Keratinocyte (primary cell): ENCODE measurements at regions of chr6 and their contacts with region 1.

Region 1: DNA sequence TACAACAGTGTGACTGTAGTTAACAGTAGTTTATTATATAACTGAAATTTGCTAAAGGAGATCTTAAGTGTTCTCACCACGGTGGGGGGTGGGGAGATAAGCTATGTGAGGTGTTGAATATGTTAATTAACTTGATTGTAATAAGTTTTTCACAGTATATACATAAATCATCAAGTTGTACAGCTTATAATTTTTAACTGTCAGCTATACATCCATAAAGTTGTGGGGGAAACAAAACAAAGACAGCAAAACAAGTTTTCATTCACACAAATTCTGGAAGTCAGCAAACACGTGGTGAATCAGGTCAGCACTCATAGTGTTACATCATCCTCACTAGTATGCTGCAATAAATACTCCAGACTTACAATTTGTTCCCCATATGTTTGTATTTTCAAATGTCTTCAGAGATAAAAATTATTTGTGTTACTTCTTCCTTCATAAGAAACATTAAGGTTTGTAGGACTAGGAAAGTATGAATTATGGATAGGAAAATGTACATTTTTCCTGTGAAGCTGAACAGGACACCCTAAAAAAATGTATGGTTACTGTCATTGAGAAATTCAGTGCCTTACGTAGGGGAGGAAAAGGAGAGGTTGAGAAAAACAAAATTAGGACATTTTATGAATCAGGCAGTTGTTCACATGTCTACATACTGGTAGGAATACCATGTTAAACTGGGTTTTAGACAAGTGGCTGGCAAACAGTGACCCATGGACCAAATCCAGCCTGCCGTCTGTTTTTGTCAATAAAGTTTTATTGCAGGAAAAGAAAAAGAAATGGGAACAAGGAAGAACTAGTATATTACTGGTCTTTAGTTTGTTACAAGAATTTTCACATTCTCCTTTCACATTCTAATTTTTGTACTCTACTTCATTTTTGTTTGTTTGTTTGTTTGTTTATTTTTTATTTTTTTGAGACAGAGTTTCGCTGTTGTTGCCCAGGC is 6.0 kb downstream of the SUMO4 start:
- DNase-seq: no peak
- H3K4me3 ChIP-seq: no peak overlapping the region
- H3K27ac ChIP-seq: peak overlapping the region; percentile 53
- H3K4me1 ChIP-seq: peaks cover 9% of the 10 kb centered on the region
- H3K27me3 ChIP-seq: no peaks in the 10 kb centered on the region
- CTCF ChIP-seq: no peak

Region 2: DNA sequence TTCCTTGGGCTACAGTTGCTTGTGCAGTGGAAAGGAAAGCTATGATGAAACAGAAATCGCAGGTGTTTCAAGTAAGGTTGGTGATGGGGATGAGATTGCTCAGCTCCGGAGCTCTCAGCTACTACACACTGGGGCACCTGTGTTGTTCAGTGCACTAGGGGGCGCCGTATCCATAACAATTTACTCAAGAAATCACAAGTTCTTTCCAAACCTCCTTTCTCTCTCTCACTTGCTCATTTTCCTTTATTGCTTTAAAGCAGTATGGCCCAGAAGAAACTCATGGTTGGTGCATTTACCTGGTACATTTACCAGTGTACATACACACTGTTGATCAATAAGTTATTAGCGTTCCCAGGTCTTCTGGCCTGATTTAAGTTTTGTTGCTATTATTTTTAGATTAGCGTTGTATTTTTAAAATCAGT is 323.8 kb before region 1 on chr6:
- dilution Hi-C with region 1: loop called (anchors 25 kb)
- DNase-seq: peak; percentile 19
- H3K4me3 ChIP-seq: no peak overlapping the region
- H3K27ac ChIP-seq: no peak overlapping the region
- H3K4me1 ChIP-seq: peaks cover 13% of the 10 kb centered on the region
- H3K27me3 ChIP-seq: no peaks in the 10 kb centered on the region
- CTCF ChIP-seq: peak; percentile 75 to 79 (median 78)

Region 3: DNA sequence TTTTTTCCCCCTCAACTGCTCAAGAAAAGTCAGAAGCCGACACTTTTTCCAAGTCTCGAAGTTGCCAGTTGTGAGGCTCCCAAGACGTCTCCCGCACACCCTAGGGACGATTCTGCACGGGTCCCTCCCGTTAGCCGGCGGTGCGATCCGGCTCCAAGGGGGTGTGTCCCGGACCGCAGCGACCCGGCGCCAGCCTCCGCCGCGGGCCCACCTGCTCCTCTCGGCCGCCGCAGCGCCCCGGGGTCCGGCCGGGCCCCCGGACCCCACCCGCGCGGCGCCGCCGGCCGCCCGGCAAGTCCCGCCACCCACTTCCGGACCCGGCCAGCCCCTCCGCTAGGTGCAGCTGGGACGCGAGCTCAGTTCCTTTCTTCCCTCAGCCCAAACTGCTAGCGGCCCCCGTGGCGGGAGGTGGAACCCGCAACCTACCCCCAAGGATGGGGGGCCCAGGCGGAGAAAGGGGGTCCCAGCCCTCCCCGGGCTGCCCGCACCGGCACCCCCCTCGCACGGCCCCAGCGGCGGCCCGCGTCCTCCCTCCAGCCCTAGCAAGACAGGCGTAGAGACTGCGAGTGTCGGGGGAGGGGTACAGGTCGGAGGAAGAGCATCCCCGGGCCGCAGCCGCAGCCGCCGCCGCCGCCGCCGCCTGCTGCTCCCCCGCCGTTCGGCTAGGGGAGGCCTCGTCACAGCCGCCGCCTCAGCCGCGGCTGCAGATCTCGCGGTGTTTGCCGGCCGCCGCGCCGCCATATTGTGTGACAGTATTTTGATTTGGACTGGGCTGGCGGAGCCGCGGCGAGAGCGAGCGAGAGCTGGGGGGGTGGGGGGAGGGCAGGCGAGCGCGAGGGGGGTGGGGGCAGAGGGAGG is 89.1 kb before region 1 on chr6:
- dilution Hi-C with region 1: no loop called
- DNase-seq: no peak
- H3K4me3 ChIP-seq: peak overlapping the region; percentile 86 to 97 (median 86)
- H3K27ac ChIP-seq: peak overlapping the region; percentile 81
- H3K4me1 ChIP-seq: peaks cover 12% of the 10 kb centered on the region
- H3K27me3 ChIP-seq: no peaks in the 10 kb centered on the region
- CTCF ChIP-seq: no peak